ENCODE measurements at regions of chr2 and their contacts with region 1.

Region 1: GRCh38 chr2:127675331-127676261 is at the start of gene LIMS2:
- DNase-seq: peak; percentile 52
- ATAC-seq: peak; percentile 57
- H3K4me3 Mint-ChIP-seq: peak within 1 kb of the TSS; percentile 79
- H3K27ac Mint-ChIP-seq: no peak within 1 kb of the TSS
- H3K4me1 Mint-ChIP-seq: peaks cover 9% of the 10 kb centered on the region
- H3K27me3 Mint-ChIP-seq: peaks cover 61% of the 10 kb centered on the region
- CTCF ChIP-seq: no peak
- total RNA-seq, gene LIMS2: 1.9 to 2.5 TPM (median 2.4 TPM) in 3 replicates

Region 2: DNA sequence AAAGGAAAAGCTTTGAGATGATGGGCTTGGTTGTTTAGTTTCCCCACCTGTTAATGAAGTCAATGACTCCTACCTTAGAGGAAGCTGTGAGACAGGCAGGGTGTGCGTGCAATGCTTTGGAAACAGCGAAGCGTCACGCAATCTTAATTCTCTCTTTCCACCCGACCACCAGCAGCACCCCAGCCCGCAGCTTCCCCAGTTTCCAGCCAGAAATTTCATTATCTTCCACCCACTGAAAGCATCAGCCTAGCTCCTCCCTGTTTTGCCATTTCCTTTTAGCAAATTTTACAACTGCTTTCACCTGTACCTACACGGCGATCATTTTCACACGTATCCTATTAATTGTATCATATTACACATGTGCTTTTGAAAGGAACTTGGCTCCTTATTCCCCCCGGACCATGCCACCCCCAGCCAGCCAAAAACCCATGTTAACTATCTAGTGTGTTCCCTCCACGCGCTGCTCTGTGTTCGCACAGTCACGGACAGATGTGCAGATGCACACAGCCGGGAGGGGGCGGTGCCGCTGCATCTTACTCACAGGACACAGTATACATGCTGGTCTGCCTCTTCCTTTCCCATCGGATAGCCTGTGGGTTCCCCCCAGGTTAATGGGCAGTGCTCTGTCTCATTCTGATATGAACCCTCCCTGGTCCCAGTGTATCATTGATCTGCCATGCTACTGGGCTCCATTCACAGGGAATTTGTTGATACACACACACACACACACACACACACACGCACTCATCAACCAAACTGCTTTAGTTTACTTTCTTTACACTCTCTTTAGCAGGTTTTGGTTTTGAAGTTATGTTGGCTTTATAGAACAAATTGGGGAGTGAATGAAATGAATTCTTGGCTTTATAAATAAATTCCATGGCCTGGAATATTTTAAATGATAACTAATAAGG is 477.9 kb before region 1 on chr2:
- CTCF ChIA-PET with region 1: no interaction called
- POLR2A ChIA-PET with region 1: no interaction called
- DNase-seq: peak; percentile 82
- ATAC-seq: peak; percentile 84
- H3K4me3 Mint-ChIP-seq: peak overlapping the region; percentile 26; the same call in 1 of the 2 replicates
- H3K27ac Mint-ChIP-seq: no peak overlapping the region
- H3K4me1 Mint-ChIP-seq: peaks cover 39% of the 10 kb centered on the region
- H3K27me3 Mint-ChIP-seq: no peaks in the 10 kb centered on the region
- CTCF ChIP-seq: 0 out of 2 replicates have a peak, but pooled peaks have one; percentile 26

Region 3: DNA sequence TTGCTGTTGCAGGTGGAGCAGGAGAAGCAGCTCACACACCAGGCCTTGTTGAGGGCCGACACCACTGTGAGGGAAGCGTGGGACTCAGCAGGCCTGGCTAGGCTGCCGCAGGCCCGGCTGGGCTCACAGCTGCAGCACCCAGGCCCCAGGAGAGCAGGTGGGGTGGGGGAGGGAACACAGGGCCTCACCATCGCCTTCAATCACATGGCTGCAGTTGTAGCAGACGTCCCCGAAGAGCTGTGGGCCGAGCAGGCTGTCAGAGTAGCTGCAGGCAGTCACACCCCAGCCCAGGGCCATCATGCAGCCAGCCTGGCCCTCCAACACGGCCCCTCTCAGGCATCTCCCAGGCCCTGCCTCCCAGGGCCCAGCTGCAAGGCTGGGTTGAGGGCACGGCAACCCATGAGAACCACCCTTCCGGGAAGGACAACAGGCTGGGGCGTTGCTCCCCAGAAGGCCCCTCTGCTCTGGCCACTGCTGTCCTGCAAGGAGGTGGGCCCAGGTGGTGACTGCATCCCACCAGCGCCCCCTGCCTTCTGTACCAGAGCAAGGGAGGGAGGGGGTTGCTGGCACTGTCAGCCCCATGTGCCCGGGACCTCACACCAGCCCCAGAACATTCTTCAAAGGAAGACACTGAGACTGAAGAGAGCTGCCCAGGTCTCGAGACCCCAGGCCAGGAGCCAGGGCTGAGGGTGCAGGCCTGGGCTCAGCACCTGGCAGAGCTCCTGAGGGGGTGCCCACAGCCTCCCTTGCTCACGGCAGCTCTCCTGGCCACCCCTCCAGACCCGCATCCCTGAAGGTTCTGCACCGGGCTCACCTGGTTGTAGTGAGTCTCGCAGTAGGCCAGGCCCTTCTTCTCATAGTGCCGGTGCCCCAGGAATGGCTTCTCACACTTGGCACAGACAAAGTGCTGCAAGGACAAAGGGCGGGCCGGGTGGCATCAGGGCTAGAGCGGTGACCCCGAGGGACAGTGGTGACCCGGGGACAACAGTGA is 35.2 kb before region 1 on chr2:
- CTCF ChIA-PET with region 1: interaction called, 11 read pairs
- POLR2A ChIA-PET with region 1: no interaction called
- DNase-seq: peak; percentile 68
- ATAC-seq: peak; percentile 57
- H3K4me3 Mint-ChIP-seq: no peak overlapping the region
- H3K27ac Mint-ChIP-seq: no peak overlapping the region
- H3K4me1 Mint-ChIP-seq: peaks cover 11% of the 10 kb centered on the region
- H3K27me3 Mint-ChIP-seq: no peaks in the 10 kb centered on the region
- CTCF ChIP-seq: peak; percentile 58

Measured in WTC11 (cell line).